Activated CD4-positive, alpha-beta T cell treated with anti-CD3 and anti-CD28 coated beads for 36 hours (primary cell): ENCODE measurements at regions of chr13 and their contacts with region 1.

Region 1: GRCh38 chr13:41193919-41194824 is at the start of gene KBTBD7:
- DNase-seq: peak; percentile 98
- ATAC-seq: peak; percentile 96
- H3K4me3 Mint-ChIP-seq: peak within 1 kb of the TSS; percentile 83
- H3K27ac Mint-ChIP-seq: peak within 1 kb of the TSS; percentile 98
- H3K4me1 Mint-ChIP-seq: peaks cover 50% of the 10 kb centered on the region
- H3K27me3 Mint-ChIP-seq: no peaks in the 10 kb centered on the region
- total RNA-seq, gene KBTBD7: 3.7 to 4.5 TPM

Region 2: GRCh38 chr13:41040606-41041319 is 153.4 kb before region 1 on chr13:
- CTCF ChIA-PET with region 1: no interaction called
- POLR2A ChIA-PET with region 1: no interaction called
- intact Hi-C with region 1: no loop called
- DNase-seq: no peak
- ATAC-seq: peak; percentile 44
- H3K4me3 Mint-ChIP-seq: no peak overlapping the region
- H3K27ac Mint-ChIP-seq: peak overlapping the region; percentile 6
- H3K4me1 Mint-ChIP-seq: peaks cover 8% of the 10 kb centered on the region
- H3K27me3 Mint-ChIP-seq: no peaks in the 10 kb centered on the region

Region 3: GRCh38 chr13:41179593-41180250 is 14.4 kb before region 1 on chr13:
- CTCF ChIA-PET with region 1: interaction called, 5 read pairs
- POLR2A ChIA-PET with region 1: no interaction called
- intact Hi-C with region 1: loop called in 1 of 2 experiments (anchors 1 kb)
- DNase-seq: peak; percentile 20
- ATAC-seq: peak; percentile 79
- H3K4me3 Mint-ChIP-seq: no peak overlapping the region
- H3K27ac Mint-ChIP-seq: peak overlapping the region; percentile 66
- H3K4me1 Mint-ChIP-seq: peaks cover 16% of the 10 kb centered on the region
- H3K27me3 Mint-ChIP-seq: no peaks in the 10 kb centered on the region

Region 4: GRCh38 chr13:41263261-41264027 is 69.3 kb after region 1 on chr13 and contains the start of gene MTRF1:
- CTCF ChIA-PET with region 1: no interaction called
- POLR2A ChIA-PET with region 1: no interaction called
- intact Hi-C with region 1: loop called (anchors 1 kb)
- DNase-seq: peak; percentile 89
- ATAC-seq: peak; percentile 93
- H3K4me3 Mint-ChIP-seq: peak within 1 kb of the TSS; percentile 80
- H3K27ac Mint-ChIP-seq: peak within 1 kb of the TSS; percentile 95
- H3K4me1 Mint-ChIP-seq: peaks cover 12% of the 10 kb centered on the region
- H3K27me3 Mint-ChIP-seq: no peaks in the 10 kb centered on the region
- total RNA-seq, gene MTRF1: 19.7 to 22.1 TPM

Region 5: GRCh38 chr13:41274881-41275280 is 80.7 kb after region 1 on chr13:
- CTCF ChIA-PET with region 1: no interaction called
- POLR2A ChIA-PET with region 1: no interaction called
- intact Hi-C with region 1: no loop called
- DNase-seq: no peak
- ATAC-seq: no peak
- H3K4me3 Mint-ChIP-seq: no peak overlapping the region
- H3K27ac Mint-ChIP-seq: no peak overlapping the region
- H3K4me1 Mint-ChIP-seq: peaks cover 24% of the 10 kb centered on the region
- H3K27me3 Mint-ChIP-seq: no peaks in the 10 kb centered on the region